ENCODE measurements at regions of chr3 and their contacts with region 1.

Region 1: GRCh38 chr3:26712211-26713026 is 89.8 kb downstream of the LRRC3B start:
- DNase-seq: no peak
- ATAC-seq: peak; percentile 54 to 80
- H3K4me3 ChIP-seq: no peak overlapping the region
- H3K27ac ChIP-seq: no peak overlapping the region
- H3K4me1 ChIP-seq: no peaks in the 10 kb centered on the region
- H3K27me3 ChIP-seq: no peaks in the 10 kb centered on the region
- CTCF ChIP-seq: peak; percentile 50 to 74 (median 59)
- POLR2A ChIP-seq: no peak

Region 2: GRCh38 chr3:25372167-25372566 is 1340.3 kb before region 1 on chr3:
- in situ Hi-C with region 1: no loop called
- intact Hi-C with region 1: no loop called
- DNase-seq: no peak
- ATAC-seq: no peak
- H3K4me3 ChIP-seq: no peak overlapping the region
- H3K27ac ChIP-seq: no peak overlapping the region
- H3K4me1 ChIP-seq: no peaks in the 10 kb centered on the region
- H3K27me3 ChIP-seq: no peaks in the 10 kb centered on the region
- CTCF ChIP-seq: no peak
- POLR2A ChIP-seq: no peak

Region 3: DNA sequence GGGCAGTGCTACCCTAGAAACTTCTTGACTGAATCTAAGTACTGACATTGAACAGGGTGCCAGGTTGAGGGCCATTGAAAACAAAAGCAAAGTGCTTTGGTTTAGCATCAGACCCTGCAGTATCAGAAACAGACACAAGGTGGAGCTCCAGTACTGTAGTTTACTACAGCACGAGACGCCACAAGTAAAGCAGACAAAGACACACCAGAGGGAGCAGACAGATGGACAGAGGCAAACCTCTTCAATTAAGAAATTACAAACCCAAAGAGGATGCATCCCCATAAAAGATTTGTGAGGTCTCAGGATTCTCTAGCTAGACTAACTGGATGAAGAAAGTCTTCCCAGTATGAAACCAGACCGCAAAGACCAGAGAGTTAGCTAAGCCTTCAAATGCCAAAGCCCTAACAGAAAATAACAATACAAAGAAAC is 1064.3 kb before region 1 on chr3:
- in situ Hi-C with region 1: loop called in 2 of 4 experiments (anchors 25 kb)
- intact Hi-C with region 1: loop called (anchors 2 kb)
- DNase-seq: peak; percentile 33 to 55
- ATAC-seq: peak; percentile 80 to 97
- H3K4me3 ChIP-seq: no peak overlapping the region
- H3K27ac ChIP-seq: no peak overlapping the region
- H3K4me1 ChIP-seq: peaks cover 17 to 20% of the 10 kb centered on the region in 2 donors
- H3K27me3 ChIP-seq: no peaks in the 10 kb centered on the region
- CTCF ChIP-seq: peak; percentile 66 to 91 (median 85)
- POLR2A ChIP-seq: no peak

Region 4: DNA sequence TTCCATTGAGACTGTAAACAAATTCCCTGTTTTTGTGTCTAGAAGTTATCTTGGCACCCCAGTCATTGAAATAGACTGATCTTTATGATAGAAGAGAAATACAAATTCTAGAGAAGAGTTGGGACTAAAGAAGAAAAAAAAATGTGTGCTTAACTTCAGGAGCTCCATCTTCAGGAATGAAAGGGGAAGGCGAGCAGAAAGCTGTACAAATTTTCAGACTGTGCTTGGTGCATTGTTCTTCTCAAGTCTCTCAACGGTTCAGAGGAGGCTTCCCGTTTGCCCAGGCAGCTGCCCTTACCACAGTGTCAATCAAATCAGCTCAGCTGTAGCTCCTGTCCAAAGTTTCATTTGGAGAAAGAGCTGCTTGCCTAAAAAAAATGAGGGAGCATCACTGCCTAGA is 880.8 kb before region 1 on chr3:
- in situ Hi-C with region 1: loop called in 2 of 4 experiments (anchors 25 kb)
- intact Hi-C with region 1: no loop called
- DNase-seq: no peak
- ATAC-seq: no peak
- H3K4me3 ChIP-seq: no peak overlapping the region
- H3K27ac ChIP-seq: no peak overlapping the region
- H3K4me1 ChIP-seq: no peaks in the 10 kb centered on the region
- H3K27me3 ChIP-seq: no peaks in the 10 kb centered on the region
- CTCF ChIP-seq: no peak
- POLR2A ChIP-seq: no peak

Region 5: GRCh38 chr3:25843332-25843731 is 869.1 kb before region 1 on chr3:
- in situ Hi-C with region 1: loop called (anchors 10 to 25 kb)
- intact Hi-C with region 1: no loop called
- DNase-seq: no peak
- ATAC-seq: no peak
- H3K4me3 ChIP-seq: no peak overlapping the region
- H3K27ac ChIP-seq: no peak overlapping the region
- H3K4me1 ChIP-seq: no peaks in the 10 kb centered on the region
- H3K27me3 ChIP-seq: no peaks in the 10 kb centered on the region
- CTCF ChIP-seq: peak in 3 of 5 experiments; percentile 11 to 41 (median 21)
- POLR2A ChIP-seq: no peak

Region 6: DNA sequence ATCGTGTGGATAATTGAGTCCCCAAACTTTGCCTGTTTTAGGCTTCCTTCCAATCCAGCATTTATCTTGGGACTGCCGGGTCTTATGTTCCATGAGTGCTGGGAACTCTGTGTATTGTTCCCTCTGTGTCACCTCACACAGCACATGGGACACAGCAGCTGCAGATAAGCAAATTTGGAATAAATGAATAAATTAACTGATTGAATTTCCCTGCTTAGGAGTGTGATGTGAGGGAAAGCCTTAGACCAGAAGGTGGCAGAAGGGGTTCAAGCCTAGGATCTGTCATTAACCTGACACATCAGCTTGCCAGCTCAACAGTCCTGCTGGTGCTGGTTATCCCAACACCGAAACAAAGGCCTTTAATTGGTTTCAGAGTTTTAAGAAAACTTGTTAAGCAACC is 808.2 kb before region 1 on chr3:
- in situ Hi-C with region 1: no loop called
- intact Hi-C with region 1: loop called (anchors 2 kb)
- DNase-seq: no peak
- ATAC-seq: peak in 1 of 2 donors; percentile 52
- H3K4me3 ChIP-seq: no peak overlapping the region
- H3K27ac ChIP-seq: no peak overlapping the region
- H3K4me1 ChIP-seq: no peaks in the 10 kb centered on the region
- H3K27me3 ChIP-seq: no peaks in the 10 kb centered on the region
- CTCF ChIP-seq: peak in 3 of 5 experiments; percentile 43 to 48 (median 47)
- POLR2A ChIP-seq: no peak

Region 7: GRCh38 chr3:26825454-26825853 is 113.0 kb after region 1 on chr3:
- in situ Hi-C with region 1: no loop called
- intact Hi-C with region 1: no loop called
- DNase-seq: no peak
- ATAC-seq: no peak
- H3K4me3 ChIP-seq: no peak overlapping the region
- H3K27ac ChIP-seq: no peak overlapping the region
- H3K4me1 ChIP-seq: no peaks in the 10 kb centered on the region
- H3K27me3 ChIP-seq: no peaks in the 10 kb centered on the region
- CTCF ChIP-seq: no peak
- POLR2A ChIP-seq: no peak

Measured in gastrocnemius medialis (tissue), 4 donors.